WTC11 (cell line): ENCODE measurements at regions of chr9 and their contacts with region 1.

Region 1: GRCh38 chr9:124880501-124880900 is 18.6 kb downstream of the ARPC5L start:
- DNase-seq: peak; percentile 67
- ATAC-seq: peak; percentile 82
- H3K4me3 Mint-ChIP-seq: peak overlapping the region; percentile 10; the same call in 1 of the 2 replicates
- H3K27ac Mint-ChIP-seq: no peak overlapping the region
- H3K4me1 Mint-ChIP-seq: peaks cover 48% of the 10 kb centered on the region
- H3K27me3 Mint-ChIP-seq: no peaks in the 10 kb centered on the region
- CTCF ChIP-seq: no peak

Region 2: DNA sequence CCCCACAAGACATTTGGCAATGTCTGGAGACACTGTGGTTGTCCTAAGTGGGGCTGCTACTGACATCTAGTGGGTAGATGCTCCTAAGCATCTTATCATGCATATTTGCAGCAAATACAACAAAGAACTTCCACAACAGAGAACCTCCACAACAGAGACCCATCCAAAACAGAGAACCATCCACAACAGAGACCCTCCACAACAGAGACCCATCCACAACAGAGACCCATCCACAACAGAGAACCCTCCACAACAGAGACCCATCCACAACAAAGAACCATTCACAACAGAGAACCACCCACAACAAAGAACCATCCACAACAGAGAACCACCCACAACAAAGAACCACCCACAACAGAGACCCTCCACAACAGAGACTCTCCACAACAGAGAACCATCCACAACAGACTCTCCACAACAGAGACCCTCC is 14.3 kb after region 1 on chr9:
- CTCF ChIA-PET with region 1: interaction called, 16 read pairs
- POLR2A ChIA-PET with region 1: no interaction called
- DNase-seq: peak; percentile 39
- ATAC-seq: peak; percentile 92
- H3K4me3 Mint-ChIP-seq: no peak overlapping the region
- H3K27ac Mint-ChIP-seq: peak overlapping the region; percentile 61
- H3K4me1 Mint-ChIP-seq: peaks cover 7% of the 10 kb centered on the region; the same call in 1 of the 2 replicates
- H3K27me3 Mint-ChIP-seq: no peaks in the 10 kb centered on the region
- CTCF ChIP-seq: no peak